ENCODE measurements at regions of chr7 and their contacts with region 1.

Region 1: DNA sequence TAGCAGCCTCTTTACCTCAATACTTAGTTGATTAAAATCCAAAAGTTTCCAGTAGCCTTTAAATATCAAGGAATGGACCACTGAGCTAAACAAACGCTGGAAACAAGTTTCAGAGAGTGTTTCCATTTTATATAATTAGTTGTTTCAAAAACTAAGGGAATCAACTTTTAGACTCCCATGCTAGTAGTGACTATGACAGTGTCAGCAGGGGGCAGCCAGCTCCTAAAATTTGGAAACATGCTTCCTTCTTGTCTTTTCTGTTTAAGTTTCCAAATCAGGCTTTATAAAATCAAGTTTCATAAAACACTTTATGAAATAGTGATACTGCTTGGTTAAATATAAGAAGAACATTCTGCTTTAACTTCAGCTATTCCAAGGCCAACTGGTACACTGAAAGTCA is 138.2 kb upstream of the TMEM229A start:
- DNase-seq: peak in 9 of 10 donors; percentile 31 to 77 (median 55)
- H3K4me3 ChIP-seq: no peak overlapping the region
- H3K27ac ChIP-seq: peak overlapping the region in 1 of 59 donors; percentile 22
- H3K27me3 ChIP-seq: no peaks in the 10 kb centered on the region
- CTCF ChIP-seq: peak in 55 of 56 donors; percentile 19 to 89 (median 64)

Region 2: DNA sequence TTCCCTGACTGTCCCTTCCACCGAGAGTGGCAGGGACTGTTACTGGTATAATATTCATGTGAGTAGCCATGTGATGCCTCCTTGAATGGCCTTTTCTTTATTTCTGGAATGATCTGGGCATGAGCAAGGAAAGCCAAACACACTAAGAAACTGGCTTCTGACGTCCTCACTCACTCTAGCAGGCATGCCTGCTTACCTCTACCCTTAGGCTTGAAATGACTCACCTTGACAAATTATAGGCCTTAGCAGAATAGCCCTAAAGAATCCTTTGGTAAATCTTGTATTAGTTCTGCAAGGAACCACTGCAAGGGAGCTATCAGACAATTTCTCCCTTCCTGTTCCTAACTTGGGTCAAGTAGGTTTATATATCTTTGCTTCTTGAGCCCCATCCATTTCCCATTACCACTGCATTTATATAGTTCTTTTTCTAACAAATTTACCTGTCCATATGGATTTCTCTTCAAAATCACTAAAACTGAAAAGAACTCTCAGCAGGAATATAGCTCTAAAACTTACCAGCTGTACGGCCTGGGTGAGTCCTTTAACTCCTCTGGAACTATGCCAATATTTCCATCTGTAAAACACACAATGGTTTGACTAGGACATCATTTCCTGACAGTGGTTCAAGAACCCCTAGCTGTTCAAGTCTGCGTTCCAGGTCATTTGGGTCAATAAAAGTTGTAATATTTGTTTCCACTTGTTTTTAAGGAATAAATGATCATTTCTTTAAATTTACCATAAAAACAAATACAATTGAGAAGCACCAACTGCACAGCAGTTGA is 600.5 kb before region 1 on chr7:
- intact Hi-C with region 1: no loop called
- DNase-seq: no peak
- H3K4me3 ChIP-seq: no peak overlapping the region
- H3K27ac ChIP-seq: no peak overlapping the region
- H3K27me3 ChIP-seq: no peaks in the 10 kb centered on the region
- CTCF ChIP-seq: no peak

Region 3: DNA sequence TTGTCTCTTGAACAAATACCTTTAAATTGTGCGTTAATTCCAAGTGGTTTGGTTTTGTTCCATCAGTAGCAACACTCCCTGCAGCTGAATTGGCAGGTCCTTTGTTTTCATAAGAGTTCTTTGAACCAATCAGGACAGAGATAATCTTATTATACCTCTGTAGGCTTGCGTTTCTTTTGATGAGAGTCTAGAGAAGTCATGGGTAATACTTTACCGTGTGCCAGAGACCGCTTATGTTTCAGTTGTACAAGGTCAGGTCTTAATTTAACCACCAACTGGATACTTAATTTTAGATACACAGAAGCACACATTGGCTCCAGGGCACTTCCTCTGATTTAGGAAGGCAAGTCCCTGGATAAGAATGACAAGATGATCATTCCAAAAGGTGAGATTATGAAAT is 569.5 kb before region 1 on chr7 and contains the start of gene ASB15:
- intact Hi-C with region 1: no loop called
- DNase-seq: no peak
- H3K4me3 ChIP-seq: no peak within 1 kb of the TSS
- H3K27ac ChIP-seq: no peak within 1 kb of the TSS
- H3K27me3 ChIP-seq: peaks cover 0 to 6% (median 0%) of the 10 kb centered on the region in 45 donors
- CTCF ChIP-seq: no peak
- total RNA-seq, gene ASB15: not detected

Region 4: GRCh38 chr7:124051681-124052377 is 119.2 kb before region 1 on chr7:
- intact Hi-C with region 1: no loop called
- DNase-seq: no peak
- H3K4me3 ChIP-seq: no peak overlapping the region
- H3K27ac ChIP-seq: no peak overlapping the region
- H3K27me3 ChIP-seq: no peaks in the 10 kb centered on the region
- CTCF ChIP-seq: no peak

Region 5: DNA sequence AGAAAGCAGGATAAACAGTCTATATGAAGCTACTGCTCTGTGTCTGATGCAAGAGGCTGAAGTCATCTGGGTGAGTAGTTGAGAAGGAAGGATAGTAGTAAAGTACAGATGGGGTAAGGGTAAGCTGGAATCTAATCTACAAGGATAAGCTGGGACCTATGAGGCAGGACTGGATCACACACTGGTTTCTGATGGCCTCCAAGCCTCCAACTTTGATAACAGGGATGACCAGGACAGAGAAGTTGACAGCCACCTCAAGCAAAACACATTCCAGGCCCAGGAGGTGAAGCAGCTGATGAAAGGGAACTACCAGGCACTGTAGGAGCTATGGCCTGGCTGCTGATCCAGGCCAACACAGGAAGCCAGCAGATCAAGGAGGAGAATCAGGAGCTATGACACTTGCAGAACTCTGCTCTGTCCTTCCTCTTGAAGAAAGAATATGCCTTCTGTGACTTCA is 139.9 kb after region 1 on chr7:
- intact Hi-C with region 1: no loop called
- DNase-seq: no peak
- H3K4me3 ChIP-seq: no peak overlapping the region
- H3K27ac ChIP-seq: no peak overlapping the region
- H3K27me3 ChIP-seq: no peaks in the 10 kb centered on the region
- CTCF ChIP-seq: no peak

Region 6: DNA sequence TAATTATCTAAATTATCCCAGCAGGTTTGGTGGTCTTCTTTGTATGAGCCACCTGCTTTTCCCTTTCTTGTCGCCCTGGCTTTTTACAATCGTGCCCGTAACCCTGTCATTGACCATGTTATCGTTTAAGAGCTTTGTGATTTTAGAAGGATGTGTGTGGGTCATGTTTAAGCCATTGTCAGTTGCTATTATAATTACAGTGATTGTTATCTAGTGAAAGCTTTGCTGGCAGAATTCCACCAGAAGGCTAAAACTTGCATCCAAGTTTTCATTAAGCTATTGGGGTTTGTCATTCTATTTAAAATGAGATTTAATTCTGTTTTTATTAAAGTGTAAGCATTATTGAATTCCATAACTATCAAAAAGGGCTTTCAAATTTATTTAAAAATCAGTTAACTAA is 216.0 kb after region 1 on chr7:
- intact Hi-C with region 1: loop called in 1 of 2 experiments (anchors 10 kb)
- DNase-seq: no peak
- H3K4me3 ChIP-seq: peak overlapping the region in 2 of 59 donors; percentile 9 to 38
- H3K27ac ChIP-seq: peak overlapping the region in 14 of 59 donors; percentile 2 to 67 (median 36)
- H3K27me3 ChIP-seq: no peaks in the 10 kb centered on the region
- CTCF ChIP-seq: no peak

Measured in dorsolateral prefrontal cortex (tissue), 120 donors.